Endothelial cell of umbilical vein (primary cell): ENCODE measurements at regions of chr17 and their contacts with region 1.

Region 1: DNA sequence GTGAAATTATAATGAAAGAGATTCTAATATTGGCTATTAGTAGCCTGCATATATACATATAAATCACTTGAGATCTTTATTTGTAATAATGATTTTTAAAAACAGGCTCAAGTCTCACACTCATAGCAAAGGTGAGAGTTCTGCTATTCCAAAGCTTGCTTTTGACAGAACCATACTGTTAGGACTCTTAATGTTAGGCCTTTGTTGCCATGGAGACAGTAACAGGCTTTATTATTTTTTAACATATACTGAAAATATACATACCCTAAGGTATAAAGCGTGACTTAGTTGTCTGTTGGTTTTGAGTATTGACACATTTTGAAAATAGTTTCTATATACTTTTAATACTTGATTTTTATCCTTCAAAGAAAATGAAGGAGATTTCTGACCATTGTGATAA is 183.6 kb downstream of the TANC2 start:
- DNase-seq: no peak
- H3K4me3 ChIP-seq: no peak overlapping the region
- H3K27ac ChIP-seq: no peak overlapping the region
- H3K4me1 ChIP-seq: no peaks in the 10 kb centered on the region
- H3K27me3 ChIP-seq: no peaks in the 10 kb centered on the region
- CTCF ChIP-seq: no peak
- POLR2A ChIP-seq: no peak

Region 2: DNA sequence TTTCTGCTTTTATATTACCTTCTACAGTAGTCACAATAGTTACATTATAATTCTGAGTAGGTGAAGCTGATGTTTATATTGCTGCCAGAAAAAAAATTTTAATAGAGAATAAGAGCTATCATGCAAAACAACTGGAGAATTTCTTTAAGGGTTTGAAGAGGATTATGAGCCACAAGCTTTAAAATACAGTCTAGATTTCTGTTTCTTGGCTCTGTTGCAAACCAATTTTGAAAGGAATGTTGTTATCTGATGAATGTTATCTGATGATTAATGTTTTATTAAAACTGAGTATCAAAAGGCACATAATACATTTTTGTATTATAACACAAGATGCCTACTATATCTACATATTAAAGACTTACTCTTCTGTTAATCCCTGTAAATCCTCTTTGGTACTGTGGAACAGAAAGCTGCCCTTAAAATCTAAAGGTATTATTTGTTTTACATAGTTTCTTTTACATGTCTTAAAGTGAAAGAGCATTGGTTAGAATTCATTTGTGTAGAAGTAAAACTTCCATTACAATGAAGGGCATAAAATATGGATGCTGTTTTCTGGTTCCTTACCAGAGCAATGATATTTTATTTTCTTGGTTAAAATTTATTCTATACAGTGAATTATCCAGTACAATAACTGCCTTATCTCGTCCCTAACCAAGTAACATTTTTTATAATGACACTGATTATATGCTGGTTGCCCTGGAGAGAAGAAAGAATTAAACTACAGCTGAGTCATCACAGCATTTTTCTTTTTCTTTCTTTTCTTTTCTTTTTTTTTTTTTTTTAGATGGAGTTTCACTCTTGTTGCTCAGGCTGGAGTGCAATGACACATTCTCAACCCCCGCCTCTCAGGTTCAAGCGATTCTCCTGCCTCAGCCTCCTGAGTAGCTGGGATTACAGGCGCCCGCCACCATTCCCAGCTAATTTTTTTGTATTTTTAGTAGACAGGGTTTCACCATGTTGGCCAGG is 22.0 kb after region 1 on chr17:
- CTCF ChIA-PET with region 1: no interaction called
- POLR2A ChIA-PET with region 1: no interaction called
- dilution Hi-C with region 1: no loop called
- intact Hi-C with region 1: loop called (anchors 2 kb)
- DNase-seq: peak; percentile 61
- H3K4me3 ChIP-seq: no peak overlapping the region
- H3K27ac ChIP-seq: no peak overlapping the region
- H3K4me1 ChIP-seq: peaks cover 7% of the 10 kb centered on the region
- H3K27me3 ChIP-seq: no peaks in the 10 kb centered on the region
- CTCF ChIP-seq: no peak
- POLR2A ChIP-seq: no peak